CD4-positive, alpha-beta T cell (primary cell): ENCODE measurements at regions of chr3 and their contacts with region 1.

Region 1: DNA sequence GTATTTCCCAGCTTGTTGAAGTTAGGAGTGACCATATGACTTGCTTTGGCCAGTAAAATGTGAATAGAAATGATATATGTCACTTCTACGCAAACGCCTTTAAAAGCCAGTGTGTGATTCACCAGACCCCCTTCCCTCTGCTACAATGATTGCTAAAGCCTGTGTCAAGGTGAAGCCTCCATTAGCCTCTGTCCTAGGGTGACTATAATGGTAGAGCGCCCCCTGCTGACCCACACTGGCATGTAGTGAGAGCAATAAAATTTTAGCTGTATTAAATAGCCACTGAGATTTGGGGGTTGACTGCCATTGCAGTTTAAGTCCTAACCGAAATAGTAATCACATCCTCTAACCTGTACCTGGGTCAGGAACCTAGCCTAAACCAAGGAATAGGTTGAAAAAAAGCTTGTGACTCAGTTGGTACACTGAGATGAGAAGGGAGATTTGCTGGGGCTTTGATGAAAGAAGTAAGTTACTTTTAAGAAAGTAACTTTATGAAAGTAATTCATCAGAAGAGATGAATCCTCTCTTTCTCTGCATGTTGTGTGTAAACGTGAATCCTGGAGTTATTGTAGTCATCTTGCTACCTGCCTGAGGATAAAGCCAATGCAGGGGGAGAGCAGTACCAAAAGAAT is 52.6 kb downstream of the GTF2E1 start:
- DNase-seq: peak; percentile 73 to 89 (median 83)
- ATAC-seq: peak; percentile 97
- H3K4me3 ChIP-seq: no peak overlapping the region
- H3K4me3 Mint-ChIP-seq: no peak overlapping the region
- H3K27ac ChIP-seq: no peak overlapping the region
- H3K27ac Mint-ChIP-seq: no peak overlapping the region
- H3K4me1 ChIP-seq: no peaks in the 10 kb centered on the region
- H3K4me1 Mint-ChIP-seq: peaks cover 25% of the 10 kb centered on the region
- H3K27me3 ChIP-seq: no peaks in the 10 kb centered on the region
- H3K27me3 Mint-ChIP-seq: no peaks in the 10 kb centered on the region
- CTCF ChIP-seq: peak; percentile 79

Region 2: DNA sequence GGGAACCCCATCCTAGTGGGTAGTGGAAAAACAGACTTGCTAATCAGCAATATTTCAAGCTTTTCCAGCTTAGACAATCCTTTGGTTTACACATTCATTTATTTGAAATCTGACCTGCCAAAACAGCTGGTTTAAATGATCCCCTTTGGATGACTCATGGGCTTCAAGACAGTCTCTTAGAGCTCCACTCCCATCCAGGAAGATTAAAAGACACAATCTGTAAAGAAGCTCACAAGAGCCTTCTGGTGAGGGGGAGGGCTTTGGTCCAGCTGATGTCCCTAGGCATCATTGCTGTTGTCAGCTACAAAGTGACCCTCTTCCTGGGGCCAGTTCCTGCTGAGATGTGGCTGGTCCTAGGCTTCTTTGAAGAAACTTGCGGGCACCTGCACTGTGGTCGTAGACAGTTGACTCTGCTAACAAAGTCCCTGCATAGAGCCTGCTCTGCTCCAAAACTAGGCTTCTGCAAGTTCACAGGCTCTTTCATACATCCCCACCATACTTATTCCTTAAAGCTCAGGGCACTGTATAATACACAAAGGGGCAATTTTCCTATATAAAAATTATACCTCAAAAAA is 1834.2 kb before region 1 on chr3:
- CTCF ChIA-PET with region 1: no interaction called
- POLR2A ChIA-PET with region 1: no interaction called
- intact Hi-C with region 1: no loop called
- DNase-seq: no peak
- ATAC-seq: no peak
- H3K4me3 ChIP-seq: no peak overlapping the region
- H3K4me3 Mint-ChIP-seq: no peak overlapping the region
- H3K27ac ChIP-seq: no peak overlapping the region
- H3K27ac Mint-ChIP-seq: no peak overlapping the region
- H3K4me1 ChIP-seq: peaks cover 17% of the 10 kb centered on the region
- H3K4me1 Mint-ChIP-seq: peaks cover 24% of the 10 kb centered on the region
- H3K27me3 ChIP-seq: no peaks in the 10 kb centered on the region
- H3K27me3 Mint-ChIP-seq: no peaks in the 10 kb centered on the region
- CTCF ChIP-seq: no peak

Region 3: DNA sequence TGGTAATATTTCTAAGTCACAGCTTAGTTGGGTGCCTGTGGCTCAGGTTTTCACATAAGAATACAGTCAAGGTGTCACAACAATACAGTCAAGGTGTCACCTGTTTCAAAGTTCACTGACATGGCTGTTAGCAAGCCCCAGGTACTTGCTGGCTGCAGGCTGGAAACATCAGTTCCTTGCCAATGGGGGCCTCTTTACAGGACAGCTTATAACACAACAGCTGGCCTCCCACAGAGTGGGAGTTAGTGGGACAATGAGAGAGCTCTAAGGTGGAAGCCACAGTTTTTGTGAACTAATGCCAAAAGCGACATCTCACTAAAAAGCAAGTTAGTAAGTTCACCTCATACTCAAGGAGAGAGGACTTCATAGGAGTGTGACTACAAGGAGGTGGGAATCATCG is 555.5 kb before region 1 on chr3:
- CTCF ChIA-PET with region 1: interaction called, 5 read pairs
- POLR2A ChIA-PET with region 1: no interaction called
- intact Hi-C with region 1: loop called (anchors 2 to 5 kb)
- DNase-seq: no peak
- ATAC-seq: no peak
- H3K4me3 ChIP-seq: no peak overlapping the region
- H3K4me3 Mint-ChIP-seq: no peak overlapping the region
- H3K27ac ChIP-seq: no peak overlapping the region
- H3K27ac Mint-ChIP-seq: no peak overlapping the region
- H3K4me1 ChIP-seq: no peaks in the 10 kb centered on the region
- H3K4me1 Mint-ChIP-seq: no peaks in the 10 kb centered on the region
- H3K27me3 ChIP-seq: no peaks in the 10 kb centered on the region
- H3K27me3 Mint-ChIP-seq: peaks cover 65% of the 10 kb centered on the region
- CTCF ChIP-seq: no peak

Region 4: GRCh38 chr3:120417272-120417911 is 377.7 kb before region 1 on chr3:
- CTCF ChIA-PET with region 1: no interaction called
- POLR2A ChIA-PET with region 1: no interaction called
- intact Hi-C with region 1: loop called in 1 of 2 experiments (anchors 5 kb)
- DNase-seq: peak; percentile 69 to 91 (median 76)
- ATAC-seq: peak; percentile 99
- H3K4me3 ChIP-seq: peak overlapping the region; percentile 51
- H3K4me3 Mint-ChIP-seq: peak overlapping the region; percentile 77
- H3K27ac ChIP-seq: no peak overlapping the region
- H3K27ac Mint-ChIP-seq: no peak overlapping the region
- H3K4me1 ChIP-seq: peaks cover 18% of the 10 kb centered on the region
- H3K4me1 Mint-ChIP-seq: peaks cover 14% of the 10 kb centered on the region
- H3K27me3 ChIP-seq: no peaks in the 10 kb centered on the region
- H3K27me3 Mint-ChIP-seq: peaks cover 5% of the 10 kb centered on the region
- CTCF ChIP-seq: peak; percentile 87

Region 5: DNA sequence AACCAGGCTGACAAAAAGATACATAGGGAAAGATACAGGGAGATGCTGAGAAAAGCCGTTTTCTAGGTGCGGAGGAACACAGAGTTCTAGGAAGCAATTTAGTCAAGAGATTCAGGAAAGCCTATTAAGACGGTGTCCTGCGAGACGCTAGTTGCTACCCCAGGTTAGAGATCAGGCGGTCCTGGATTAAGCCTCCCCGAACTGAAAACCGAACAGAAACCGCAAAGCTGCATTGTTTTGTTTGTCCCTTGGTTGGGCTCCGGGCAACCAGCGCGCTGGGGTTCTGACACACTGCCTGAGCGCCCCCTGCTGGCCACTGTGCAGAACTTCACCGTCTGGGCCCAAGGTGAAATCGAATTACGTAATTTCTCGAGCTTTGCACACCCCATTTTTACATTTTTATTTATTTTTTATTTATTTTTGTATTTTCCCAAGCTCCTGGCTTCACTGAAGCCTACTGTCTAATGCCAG is 236.3 kb before region 1 on chr3:
- CTCF ChIA-PET with region 1: interaction called, 63 read pairs
- POLR2A ChIA-PET with region 1: interaction called, 9 read pairs
- intact Hi-C with region 1: loop called (anchors 1 kb)
- DNase-seq: peak; percentile 74 to 94 (median 86)
- ATAC-seq: peak; percentile 93
- H3K4me3 ChIP-seq: peak overlapping the region; percentile 43
- H3K4me3 Mint-ChIP-seq: peak overlapping the region; percentile 78
- H3K27ac ChIP-seq: no peak overlapping the region
- H3K27ac Mint-ChIP-seq: peak overlapping the region; percentile 63
- H3K4me1 ChIP-seq: peaks cover 15% of the 10 kb centered on the region
- H3K4me1 Mint-ChIP-seq: peaks cover 24% of the 10 kb centered on the region
- H3K27me3 ChIP-seq: no peaks in the 10 kb centered on the region
- H3K27me3 Mint-ChIP-seq: peaks cover 16% of the 10 kb centered on the region
- CTCF ChIP-seq: peak; percentile 98

Region 6: GRCh38 chr3:120596116-120596852 is 198.8 kb before region 1 on chr3 and contains the start of gene NDUFB4:
- CTCF ChIA-PET with region 1: interaction called, 10 read pairs
- POLR2A ChIA-PET with region 1: interaction called, 9 read pairs
- intact Hi-C with region 1: no loop called
- DNase-seq: peak; percentile 87 to 99 (median 94)
- ATAC-seq: peak; percentile 87
- H3K4me3 ChIP-seq: peak within 1 kb of the TSS; percentile 88
- H3K4me3 Mint-ChIP-seq: peak within 1 kb of the TSS; percentile 98
- H3K27ac ChIP-seq: peak within 1 kb of the TSS; percentile 94 to 95
- H3K27ac Mint-ChIP-seq: no peak within 1 kb of the TSS
- H3K4me1 ChIP-seq: peaks cover 14% of the 10 kb centered on the region
- H3K4me1 Mint-ChIP-seq: peaks cover 8% of the 10 kb centered on the region
- H3K27me3 ChIP-seq: no peaks in the 10 kb centered on the region
- H3K27me3 Mint-ChIP-seq: no peaks in the 10 kb centered on the region
- CTCF ChIP-seq: no peak
- total RNA-seq, gene NDUFB4: 81.3 to 84.0 TPM

Region 7: DNA sequence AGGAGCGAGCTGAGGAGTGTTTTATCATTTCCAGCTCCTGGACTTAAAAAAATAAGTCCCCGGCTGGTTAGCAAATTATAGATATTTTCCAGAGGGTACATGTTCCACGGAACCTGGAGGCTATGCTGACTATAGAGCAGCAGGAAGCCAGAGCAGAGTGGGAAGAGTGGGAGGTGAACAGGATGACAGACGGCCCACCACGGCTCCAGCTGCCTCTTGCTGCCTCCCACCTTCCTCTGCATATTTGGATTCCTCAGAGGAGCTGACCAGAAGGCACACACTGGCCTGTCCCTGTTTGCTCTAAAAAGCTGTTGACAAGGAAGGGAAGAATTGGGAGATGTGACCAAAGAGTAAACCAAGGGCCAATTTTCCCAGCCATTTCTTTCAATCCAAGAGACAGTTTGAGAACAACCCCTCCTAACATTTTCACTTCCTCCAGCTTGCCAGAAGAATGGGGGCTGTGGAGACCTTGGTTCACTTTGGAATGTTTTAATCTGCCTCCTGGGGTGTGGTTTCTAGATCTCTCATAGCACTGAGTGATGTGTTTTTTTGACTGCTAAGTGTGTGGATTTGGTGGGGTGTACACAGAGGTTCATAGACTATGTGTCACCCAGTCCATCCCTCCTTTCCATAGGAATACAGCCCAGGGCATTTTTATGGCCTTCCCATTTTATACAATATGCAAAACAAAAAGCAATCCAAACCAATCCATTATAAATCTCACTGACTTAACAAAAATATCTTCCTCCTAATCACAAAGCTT is 149.9 kb before region 1 on chr3:
- CTCF ChIA-PET with region 1: no interaction called
- POLR2A ChIA-PET with region 1: no interaction called
- intact Hi-C with region 1: no loop called
- DNase-seq: no peak
- ATAC-seq: no peak
- H3K4me3 ChIP-seq: no peak overlapping the region
- H3K4me3 Mint-ChIP-seq: no peak overlapping the region
- H3K27ac ChIP-seq: no peak overlapping the region
- H3K27ac Mint-ChIP-seq: no peak overlapping the region
- H3K4me1 ChIP-seq: peaks cover under 1% of the 10 kb centered on the region
- H3K4me1 Mint-ChIP-seq: peaks cover 7% of the 10 kb centered on the region
- H3K27me3 ChIP-seq: no peaks in the 10 kb centered on the region
- H3K27me3 Mint-ChIP-seq: peaks cover 4% of the 10 kb centered on the region
- CTCF ChIP-seq: no peak

Region 8: DNA sequence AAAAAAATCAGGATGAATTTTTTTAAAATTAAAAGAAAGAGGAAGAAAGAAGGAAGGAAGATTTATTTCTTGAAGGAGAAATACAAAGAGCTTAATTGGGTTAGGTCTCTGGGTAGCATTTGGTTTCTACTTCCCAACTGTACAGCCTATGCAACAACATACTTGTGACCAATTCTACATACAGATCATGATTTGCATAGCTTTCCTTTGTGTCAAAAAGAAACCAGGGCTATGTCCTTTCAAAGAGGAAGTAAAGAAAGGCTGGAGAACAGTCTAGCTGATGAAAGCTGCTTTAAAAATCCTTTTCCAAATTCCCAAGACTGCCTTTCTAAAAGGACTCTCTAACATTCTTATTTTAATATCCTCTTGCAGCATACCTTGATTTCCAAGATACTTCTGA is 107.0 kb before region 1 on chr3:
- CTCF ChIA-PET with region 1: no interaction called
- POLR2A ChIA-PET with region 1: no interaction called
- intact Hi-C with region 1: no loop called
- DNase-seq: no peak
- ATAC-seq: no peak
- H3K4me3 ChIP-seq: no peak overlapping the region
- H3K4me3 Mint-ChIP-seq: no peak overlapping the region
- H3K27ac ChIP-seq: no peak overlapping the region
- H3K27ac Mint-ChIP-seq: no peak overlapping the region
- H3K4me1 ChIP-seq: no peaks in the 10 kb centered on the region
- H3K4me1 Mint-ChIP-seq: no peaks in the 10 kb centered on the region
- H3K27me3 ChIP-seq: no peaks in the 10 kb centered on the region
- H3K27me3 Mint-ChIP-seq: no peaks in the 10 kb centered on the region
- CTCF ChIP-seq: no peak

Region 9: GRCh38 chr3:120708408-120708807 is 86.7 kb before region 1 on chr3:
- CTCF ChIA-PET with region 1: no interaction called
- POLR2A ChIA-PET with region 1: no interaction called
- intact Hi-C with region 1: loop called in 1 of 2 experiments (anchors 10 kb)
- DNase-seq: no peak
- ATAC-seq: no peak
- H3K4me3 ChIP-seq: no peak overlapping the region
- H3K4me3 Mint-ChIP-seq: no peak overlapping the region
- H3K27ac ChIP-seq: no peak overlapping the region
- H3K27ac Mint-ChIP-seq: peak overlapping the region; percentile 40
- H3K4me1 ChIP-seq: no peaks in the 10 kb centered on the region
- H3K4me1 Mint-ChIP-seq: peaks cover 5% of the 10 kb centered on the region
- H3K27me3 ChIP-seq: no peaks in the 10 kb centered on the region
- H3K27me3 Mint-ChIP-seq: no peaks in the 10 kb centered on the region
- CTCF ChIP-seq: no peak

Region 10: GRCh38 chr3:120841264-120841663 is 46.1 kb after region 1 on chr3:
- CTCF ChIA-PET with region 1: no interaction called
- POLR2A ChIA-PET with region 1: no interaction called
- intact Hi-C with region 1: no loop called
- DNase-seq: no peak
- ATAC-seq: no peak
- H3K4me3 ChIP-seq: no peak overlapping the region
- H3K4me3 Mint-ChIP-seq: no peak overlapping the region
- H3K27ac ChIP-seq: no peak overlapping the region
- H3K27ac Mint-ChIP-seq: no peak overlapping the region
- H3K4me1 ChIP-seq: no peaks in the 10 kb centered on the region
- H3K4me1 Mint-ChIP-seq: no peaks in the 10 kb centered on the region
- H3K27me3 ChIP-seq: peaks cover 0 to 4% of the 10 kb centered on the region in 2 experiments
- H3K27me3 Mint-ChIP-seq: peaks cover 14% of the 10 kb centered on the region
- CTCF ChIP-seq: no peak